ENCODE measurements at regions of chr2 and their contacts with region 1.

Region 1: DNA sequence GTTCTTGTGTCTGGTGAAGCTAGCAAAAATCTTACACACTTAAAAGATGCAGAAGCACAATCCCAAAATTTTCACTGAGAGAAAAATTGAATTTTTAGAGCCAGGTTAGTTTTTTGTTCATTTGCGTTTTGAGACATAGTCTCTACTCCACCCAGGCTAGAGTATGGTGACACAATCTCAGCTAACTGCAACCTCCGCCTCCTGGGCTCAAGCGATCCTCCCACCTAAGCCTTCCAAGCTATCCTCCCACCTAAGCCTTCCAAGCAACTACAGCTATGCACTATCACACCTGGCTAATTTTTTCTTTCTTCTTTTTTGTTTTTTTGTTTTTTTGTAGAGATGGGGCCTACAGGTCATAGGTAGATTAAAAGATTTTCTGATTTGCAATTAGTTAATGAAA is 113.1 kb upstream of the RAB6C start:
- DNase-seq: no peak
- H3K4me3 ChIP-seq: no peak overlapping the region
- H3K27ac ChIP-seq: no peak overlapping the region
- H3K4me1 ChIP-seq: no peaks in the 10 kb centered on the region
- H3K27me3 ChIP-seq: peaks cover 40% of the 10 kb centered on the region
- CTCF ChIP-seq: no peak

Region 2: GRCh38 chr2:128449226-128450061 is 1416.9 kb before region 1 on chr2:
- CTCF ChIA-PET with region 1: interaction called, 11 read pairs
- POLR2A ChIA-PET with region 1: no interaction called
- intact Hi-C with region 1: no loop called
- DNase-seq: no peak
- H3K4me3 ChIP-seq: no peak overlapping the region
- H3K27ac ChIP-seq: no peak overlapping the region
- H3K4me1 ChIP-seq: no peaks in the 10 kb centered on the region
- H3K27me3 ChIP-seq: no peaks in the 10 kb centered on the region
- CTCF ChIP-seq: no peak

Measured in PC-9 (cell line).